B cell (primary cell): ENCODE measurements at regions of chrX and their contacts with region 1.

Region 1: DNA sequence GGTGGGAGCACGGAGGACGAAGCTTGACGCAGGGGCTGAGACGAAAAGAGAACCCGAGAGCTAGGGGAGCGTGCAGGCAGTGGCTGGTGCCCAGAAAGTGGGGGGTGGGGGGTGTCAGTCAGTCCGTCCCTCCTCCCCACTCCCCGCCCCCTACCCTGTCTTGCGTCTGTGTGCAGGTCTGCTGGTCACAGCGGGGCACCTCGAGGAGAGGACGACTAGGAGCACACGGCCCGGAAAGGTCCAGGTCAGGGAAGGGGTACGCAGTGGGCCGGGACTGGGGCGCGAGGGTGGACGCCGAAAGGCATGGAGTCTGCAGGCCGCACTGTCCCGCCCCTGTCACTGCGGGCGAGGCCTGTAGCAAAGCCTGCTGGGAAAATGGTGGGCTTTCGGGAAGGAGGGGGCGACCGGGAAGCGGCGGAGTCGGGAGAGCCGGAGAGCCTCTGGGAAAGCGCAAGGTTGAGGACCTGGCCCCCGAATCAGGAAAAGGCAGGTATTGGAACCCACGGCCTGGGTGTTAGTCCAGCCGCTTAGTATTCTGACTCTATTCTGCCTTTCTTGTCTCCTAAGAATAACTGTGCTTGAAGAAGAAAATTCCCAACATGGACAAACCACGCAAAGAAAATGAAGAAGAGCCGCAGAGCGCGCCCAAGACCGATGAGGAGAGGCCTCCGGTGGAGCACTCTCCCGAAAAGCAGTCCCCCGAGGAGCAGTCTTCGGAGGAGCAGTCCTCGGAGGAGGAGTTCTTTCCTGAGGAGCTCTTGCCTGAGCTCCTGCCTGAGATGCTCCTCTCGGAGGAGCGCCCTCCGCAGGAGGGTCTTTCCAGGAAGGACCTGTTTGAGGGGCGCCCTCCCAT is 769 bp downstream of the TCEAL1 start:
- DNase-seq: peak; percentile 47
- ATAC-seq: peak; percentile 46
- H3K4me3 ChIP-seq: peak overlapping the region; percentile 7 to 74 (median 63)
- H3K4me3 Mint-ChIP-seq: peak overlapping the region; percentile 89
- H3K27ac ChIP-seq: peak overlapping the region; percentile 67 to 68
- H3K27ac Mint-ChIP-seq: peak overlapping the region; percentile 89
- H3K4me1 ChIP-seq: peaks cover 3 to 9% of the 10 kb centered on the region in 2 donors
- H3K4me1 Mint-ChIP-seq: peaks cover 13% of the 10 kb centered on the region
- H3K27me3 ChIP-seq: no peaks in the 10 kb centered on the region
- H3K27me3 Mint-ChIP-seq: no peaks in the 10 kb centered on the region
- CTCF ChIP-seq: no peak

Region 2: DNA sequence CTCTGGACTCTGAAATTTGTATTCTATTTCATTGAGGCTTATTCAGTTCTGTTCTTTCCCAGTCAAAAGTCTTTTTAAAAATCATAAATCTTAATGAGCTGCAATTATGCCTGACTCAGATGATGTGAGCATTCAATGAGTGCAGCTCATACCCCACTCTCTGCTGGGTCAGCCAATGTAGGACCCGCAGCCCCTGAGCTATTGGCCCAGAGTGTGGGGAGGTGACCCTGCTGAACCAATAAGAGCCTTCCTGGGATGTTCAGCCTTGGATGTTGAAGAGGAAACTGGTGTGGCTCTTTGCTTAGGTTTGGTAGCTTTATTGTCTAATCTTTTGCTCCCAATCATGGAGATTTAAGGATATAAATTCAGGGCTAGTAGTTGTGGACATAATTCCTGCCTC is 56.3 kb before region 1 on chrX:
- CTCF ChIA-PET with region 1: no interaction called
- POLR2A ChIA-PET with region 1: no interaction called
- intact Hi-C with region 1: no loop called
- DNase-seq: no peak
- ATAC-seq: no peak
- H3K4me3 ChIP-seq: no peak overlapping the region
- H3K4me3 Mint-ChIP-seq: no peak overlapping the region
- H3K27ac ChIP-seq: no peak overlapping the region
- H3K27ac Mint-ChIP-seq: no peak overlapping the region
- H3K4me1 ChIP-seq: no peaks in the 10 kb centered on the region
- H3K4me1 Mint-ChIP-seq: no peaks in the 10 kb centered on the region
- H3K27me3 ChIP-seq: no peaks in the 10 kb centered on the region
- H3K27me3 Mint-ChIP-seq: no peaks in the 10 kb centered on the region
- CTCF ChIP-seq: no peak

Region 3: GRCh38 chrX:103585411-103586313 is 43.9 kb before region 1 on chrX and contains the start of gene TCEAL4:
- CTCF ChIA-PET with region 1: no interaction called
- POLR2A ChIA-PET with region 1: no interaction called
- intact Hi-C with region 1: loop called (anchors 5 kb)
- DNase-seq: peak; percentile 52
- ATAC-seq: peak; percentile 91
- H3K4me3 ChIP-seq: peak within 1 kb of the TSS in 4 of 5 experiments; percentile 62 to 71 (median 66)
- H3K4me3 Mint-ChIP-seq: peak within 1 kb of the TSS; percentile 91
- H3K27ac ChIP-seq: peak within 1 kb of the TSS in 1 of 2 donors; percentile 66
- H3K27ac Mint-ChIP-seq: peak within 1 kb of the TSS; percentile 85
- H3K4me1 ChIP-seq: peaks cover 3 to 8% of the 10 kb centered on the region in 2 donors
- H3K4me1 Mint-ChIP-seq: peaks cover 19% of the 10 kb centered on the region
- H3K27me3 ChIP-seq: no peaks in the 10 kb centered on the region
- H3K27me3 Mint-ChIP-seq: peaks cover 2% of the 10 kb centered on the region
- CTCF ChIP-seq: no peak
- total RNA-seq, gene TCEAL4: 22.4 and 23.1 TPM in 2 replicates

Region 4: GRCh38 chrX:104459796-104460195 is 830.3 kb after region 1 on chrX:
- CTCF ChIA-PET with region 1: no interaction called
- POLR2A ChIA-PET with region 1: no interaction called
- intact Hi-C with region 1: no loop called
- DNase-seq: no peak
- ATAC-seq: no peak
- H3K4me3 ChIP-seq: no peak overlapping the region
- H3K4me3 Mint-ChIP-seq: no peak overlapping the region
- H3K27ac ChIP-seq: no peak overlapping the region
- H3K27ac Mint-ChIP-seq: no peak overlapping the region
- H3K4me1 ChIP-seq: no peaks in the 10 kb centered on the region
- H3K4me1 Mint-ChIP-seq: no peaks in the 10 kb centered on the region
- H3K27me3 ChIP-seq: no peaks in the 10 kb centered on the region
- H3K27me3 Mint-ChIP-seq: no peaks in the 10 kb centered on the region
- CTCF ChIP-seq: no peak